AG04449 (cell line): ENCODE measurements at regions of chr17 and their contacts with region 1.

Region 1: GRCh38 chr17:42517516-42517915 is 18.5 kb upstream of the NAGLU start:
- DNase-seq: peak; percentile 76
- H3K4me3 ChIP-seq: no peak overlapping the region
- CTCF ChIP-seq: peak; percentile 96

Region 2: GRCh38 chr17:42312285-42313130 is 205.0 kb before region 1 on chr17:
- CTCF ChIA-PET with region 1: interaction called, 170 read pairs
- POLR2A ChIA-PET with region 1: interaction called, 15 read pairs
- DNase-seq: no peak
- H3K4me3 ChIP-seq: no peak overlapping the region
- CTCF ChIP-seq: peak; percentile 89

Region 3: DNA sequence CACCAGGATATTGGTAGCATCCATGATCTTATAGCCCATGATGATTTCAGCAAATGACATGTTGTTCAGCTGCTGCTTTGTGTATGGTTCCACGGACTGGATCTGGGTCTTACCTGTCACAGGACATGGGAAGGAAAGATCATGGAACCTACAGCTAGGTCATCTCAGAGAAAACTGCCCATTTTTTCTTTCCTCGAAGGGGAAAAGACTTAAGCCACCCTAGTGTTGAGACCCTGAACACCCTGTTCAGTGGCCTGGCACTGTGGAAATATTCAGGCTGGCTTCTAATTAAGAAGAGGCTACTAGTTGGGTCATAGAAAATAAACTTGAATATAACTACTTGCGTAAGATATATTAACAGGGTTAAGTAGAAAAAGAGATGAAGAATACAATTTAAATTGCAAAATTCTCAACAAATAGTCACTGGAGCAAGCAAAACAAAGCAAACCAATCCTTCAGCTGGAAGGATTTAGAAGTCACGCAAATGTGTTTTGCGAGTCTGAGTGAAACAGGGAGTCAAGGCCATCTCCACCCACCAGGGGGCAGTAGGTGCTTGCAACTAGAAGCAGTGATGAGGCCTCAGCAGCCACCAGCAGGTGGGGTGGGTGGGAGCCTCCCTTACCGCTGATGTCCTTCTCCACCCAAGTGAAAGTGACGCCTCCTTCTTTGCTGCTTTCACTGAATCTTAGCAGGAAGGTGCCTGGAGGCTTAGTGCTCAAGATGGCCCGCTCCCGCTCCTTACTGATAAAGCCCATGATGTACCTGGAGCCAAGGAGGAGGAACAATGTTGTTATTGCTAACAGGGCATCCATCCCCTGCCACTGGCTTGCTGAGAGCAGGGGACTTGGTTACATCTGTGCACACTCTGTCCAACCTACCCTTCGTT is 194.9 kb before region 1 on chr17:
- CTCF ChIA-PET with region 1: interaction called, 170 read pairs
- POLR2A ChIA-PET with region 1: no interaction called
- DNase-seq: peak; percentile 76
- H3K4me3 ChIP-seq: no peak overlapping the region
- CTCF ChIP-seq: peak; percentile 100

Region 4: GRCh38 chr17:42388381-42389134 is 129.0 kb before region 1 on chr17 and contains the start of gene STAT3:
- CTCF ChIA-PET with region 1: interaction called, 12 read pairs
- POLR2A ChIA-PET with region 1: interaction called, 8 read pairs
- DNase-seq: peak; percentile 98
- H3K4me3 ChIP-seq: peak within 1 kb of the TSS; percentile 96
- CTCF ChIP-seq: no peak

Region 5: GRCh38 chr17:42422958-42423712 is 94.4 kb before region 1 on chr17 and contains the start of gene CAVIN1:
- CTCF ChIA-PET with region 1: interaction called, 26 read pairs
- POLR2A ChIA-PET with region 1: interaction called, 121 read pairs
- DNase-seq: peak; percentile 92
- H3K4me3 ChIP-seq: peak within 1 kb of the TSS; percentile 100
- CTCF ChIP-seq: no peak

Region 6: GRCh38 chr17:42428141-42428944 is 89.2 kb before region 1 on chr17:
- CTCF ChIA-PET with region 1: interaction called, 26 read pairs
- POLR2A ChIA-PET with region 1: interaction called, 121 read pairs
- DNase-seq: peak; percentile 98
- H3K4me3 ChIP-seq: no peak overlapping the region
- CTCF ChIP-seq: peak; percentile 79

Region 7: DNA sequence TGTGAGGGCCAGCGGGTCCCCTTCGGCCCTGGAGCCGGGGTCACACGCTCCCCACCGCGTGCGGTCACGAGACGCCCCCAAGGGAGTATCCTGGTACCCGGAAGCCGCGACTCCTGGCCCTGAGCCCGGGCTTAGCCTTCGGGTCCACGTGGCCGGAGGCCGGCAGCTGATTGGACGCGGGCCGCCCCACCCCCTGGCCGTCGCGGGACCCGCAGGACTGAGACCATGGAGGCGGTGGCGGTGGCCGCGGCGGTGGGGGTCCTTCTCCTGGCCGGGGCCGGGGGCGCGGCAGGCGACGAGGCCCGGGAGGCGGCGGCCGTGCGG is 18.5 kb after region 1 on chr17 and contains the start of gene NAGLU:
- CTCF ChIA-PET with region 1: interaction called, 38 read pairs
- POLR2A ChIA-PET with region 1: interaction called, 14 read pairs
- DNase-seq: no peak
- H3K4me3 ChIP-seq: peak within 1 kb of the TSS; percentile 61
- CTCF ChIP-seq: no peak